GM12878 (cell line): ENCODE measurements at regions of chr2 and their contacts with region 1.

Region 1: GRCh38 chr2:120005834-120006521 is 6.9 kb upstream of the EPB41L5 start:
- DNase-seq: peak; percentile 65
- ATAC-seq: peak; percentile 94
- H3K4me3 ChIP-seq: no peak overlapping the region
- H3K27ac ChIP-seq: peak overlapping the region; percentile 25; the same call in 1 of the 2 replicates
- H3K4me1 ChIP-seq: peaks cover 10% of the 10 kb centered on the region
- H3K27me3 ChIP-seq: no peaks in the 10 kb centered on the region
- CTCF ChIP-seq: no peak
- EP300 ChIP-seq: peak in 1 of 2 experiments; percentile 33; a peak in 1 of 4 replicates
- POLR2A ChIP-seq: no peak
- RAD21 ChIP-seq: no peak

Region 2: GRCh38 chr2:119702918-119703401 is 303.0 kb before region 1 on chr2:
- CTCF ChIA-PET with region 1: no interaction called
- POLR2A ChIA-PET with region 1: no interaction called
- RAD21 ChIA-PET with region 1: no interaction called
- SMC1A ChIA-PET with region 1: interaction called, 4 read pairs
- in situ Hi-C with region 1: no loop called
- intact Hi-C with region 1: loop called (anchors 5 kb)
- DNase-seq: no peak
- ATAC-seq: peak; percentile 97
- H3K4me3 ChIP-seq: no peak overlapping the region
- H3K27ac ChIP-seq: no peak overlapping the region
- H3K4me1 ChIP-seq: peaks cover 14% of the 10 kb centered on the region
- H3K27me3 ChIP-seq: no peaks in the 10 kb centered on the region; a peak in 1 of 4 replicates
- CTCF ChIP-seq: peak; percentile 96 to 99 (median 98)
- EP300 ChIP-seq: no peak
- POLR2A ChIP-seq: no peak
- RAD21 ChIP-seq: peak; percentile 88

Region 3: GRCh38 chr2:119759451-119760236 is 246.3 kb before region 1 on chr2 and contains the start of gene PTPN4:
- CTCF ChIA-PET with region 1: no interaction called
- POLR2A ChIA-PET with region 1: interaction called, 3 read pairs
- RAD21 ChIA-PET with region 1: no interaction called
- SMC1A ChIA-PET with region 1: no interaction called
- in situ Hi-C with region 1: no loop called
- intact Hi-C with region 1: loop called (anchors 2 kb)
- DNase-seq: peak; percentile 95
- ATAC-seq: peak; percentile 93
- H3K4me3 ChIP-seq: peak within 1 kb of the TSS; percentile 98
- H3K27ac ChIP-seq: peak within 1 kb of the TSS; percentile 85
- H3K4me1 ChIP-seq: no peaks in the 10 kb centered on the region
- H3K27me3 ChIP-seq: no peaks in the 10 kb centered on the region; a peak in 1 of 4 replicates
- CTCF ChIP-seq: no peak; a peak in 1 of 6 replicates
- EP300 ChIP-seq: peak in 1 of 2 experiments; percentile 21; a peak in 1 of 4 replicates
- POLR2A ChIP-seq: peak; percentile 94
- RAD21 ChIP-seq: 0 out of 2 replicates have a peak, but pooled peaks have one; percentile 3
- polyA plus RNA-seq, gene PTPN4: 5.0 to 7.4 TPM

Region 4: GRCh38 chr2:119795309-119796303 is 210.4 kb before region 1 on chr2:
- CTCF ChIA-PET with region 1: no interaction called
- POLR2A ChIA-PET with region 1: no interaction called
- RAD21 ChIA-PET with region 1: no interaction called
- SMC1A ChIA-PET with region 1: no interaction called
- in situ Hi-C with region 1: no loop called
- intact Hi-C with region 1: no loop called
- DNase-seq: no peak
- ATAC-seq: no peak
- H3K4me3 ChIP-seq: no peak overlapping the region
- H3K27ac ChIP-seq: no peak overlapping the region
- H3K4me1 ChIP-seq: no peaks in the 10 kb centered on the region
- H3K27me3 ChIP-seq: no peaks in the 10 kb centered on the region
- CTCF ChIP-seq: no peak
- EP300 ChIP-seq: no peak
- POLR2A ChIP-seq: no peak
- RAD21 ChIP-seq: no peak